Dendritic cell treated with granulocyte-macrophage colony-stimulating factor and Interleukin-4, amounts not matched to agents 40 ng/mL and 50 ng/mL, for 4 days (primary cell): ENCODE measurements at regions of chr16 and their contacts with region 1.

Region 1: GRCh38 chr16:66270333-66270927 is 96.1 kb upstream of the CDH5 start:
- H3K4me3 Mint-ChIP-seq: no peak overlapping the region
- H3K27ac Mint-ChIP-seq: no peak overlapping the region
- H3K4me1 Mint-ChIP-seq: peaks cover 13% of the 10 kb centered on the region
- H3K27me3 Mint-ChIP-seq: peaks cover 31% of the 10 kb centered on the region

Region 2: DNA sequence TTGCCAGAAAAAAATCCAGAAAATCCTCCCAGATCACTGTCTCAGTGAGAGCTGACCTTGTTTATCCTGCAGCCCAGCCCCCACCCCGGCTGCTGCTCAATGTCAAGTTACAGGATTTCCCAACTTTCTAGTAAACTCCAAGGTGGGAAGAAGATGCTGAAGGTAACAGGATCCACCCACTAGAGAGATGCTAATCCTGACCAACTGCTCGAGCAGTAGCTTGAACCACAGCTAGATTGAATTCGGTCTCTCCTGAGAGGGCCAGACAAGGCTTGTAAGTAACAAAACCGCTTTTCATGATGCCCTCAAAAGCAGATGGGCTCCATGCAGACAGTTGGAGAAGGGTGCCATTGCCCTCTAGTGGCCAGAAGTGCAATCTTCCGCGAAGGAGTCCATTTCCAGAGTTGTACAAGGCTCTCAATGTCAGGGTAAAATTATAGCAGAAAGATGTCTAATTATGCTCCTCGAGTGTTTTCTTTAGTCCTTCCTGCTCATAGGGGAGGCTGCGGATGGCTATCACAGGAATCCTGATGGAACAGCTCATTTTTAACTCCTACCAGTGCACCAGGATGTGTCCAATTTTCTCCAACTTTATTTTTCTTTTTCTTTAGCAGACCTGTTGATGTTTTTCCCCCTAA is 1152.5 kb before region 1 on chr16:
- intact Hi-C with region 1: loop called (anchors 5 kb)
- H3K4me3 Mint-ChIP-seq: no peak overlapping the region
- H3K27ac Mint-ChIP-seq: no peak overlapping the region
- H3K4me1 Mint-ChIP-seq: no peaks in the 10 kb centered on the region
- H3K27me3 Mint-ChIP-seq: peaks cover 45% of the 10 kb centered on the region

Region 3: GRCh38 chr16:66212428-66212827 is 58.0 kb before region 1 on chr16:
- intact Hi-C with region 1: no loop called
- H3K4me3 Mint-ChIP-seq: no peak overlapping the region
- H3K27ac Mint-ChIP-seq: no peak overlapping the region
- H3K4me1 Mint-ChIP-seq: peaks cover 10% of the 10 kb centered on the region
- H3K27me3 Mint-ChIP-seq: no peaks in the 10 kb centered on the region